SK-N-SH (cell line): ENCODE measurements at regions of chr6 and their contacts with region 1.

Region 1: GRCh38 chr6:36094753-36095496 is 35.4 kb upstream of the MAPK13 start:
- DNase-seq: peak; percentile 66
- H3K4me3 ChIP-seq: peak overlapping the region in 1 of 2 experiments; percentile 39; a peak in 1 of 4 replicates
- H3K27ac ChIP-seq: no peak overlapping the region; a peak in 2 of 4 replicates
- H3K4me1 ChIP-seq: peaks cover 0 to 20% of the 10 kb centered on the region in 2 experiments; a peak in 2 of 4 replicates
- H3K27me3 ChIP-seq: no peaks in the 10 kb centered on the region
- CTCF ChIP-seq: peak; percentile 97
- EP300 ChIP-seq: no peak
- RAD21 ChIP-seq: peak; percentile 95

Region 2: GRCh38 chr6:36027501-36028087 is 67.3 kb before region 1 on chr6 and contains the start of gene MAPK14:
- CTCF ChIA-PET with region 1: interaction called, 224 read pairs
- POLR2A ChIA-PET with region 1: interaction called, 14 read pairs
- DNase-seq: peak; percentile 97
- H3K4me3 ChIP-seq: peak within 1 kb of the TSS; percentile 96 to 97
- H3K27ac ChIP-seq: peak within 1 kb of the TSS; percentile 72 to 88
- H3K4me1 ChIP-seq: no peaks in the 10 kb centered on the region; a peak in 2 of 4 replicates
- H3K27me3 ChIP-seq: no peaks in the 10 kb centered on the region
- CTCF ChIP-seq: peak; percentile 85
- EP300 ChIP-seq: no peak
- RAD21 ChIP-seq: peak; percentile 98
- polyA plus RNA-seq, gene MAPK14: 19.8 and 27.4 TPM in 2 replicates

Region 3: GRCh38 chr6:36052097-36052496 is 42.8 kb before region 1 on chr6:
- CTCF ChIA-PET with region 1: interaction called, 29 read pairs
- POLR2A ChIA-PET with region 1: no interaction called
- DNase-seq: no peak
- H3K4me3 ChIP-seq: no peak overlapping the region
- H3K27ac ChIP-seq: no peak overlapping the region
- H3K4me1 ChIP-seq: peaks cover 16 to 34% of the 10 kb centered on the region in 2 experiments; a peak in 3 of 4 replicates
- H3K27me3 ChIP-seq: no peaks in the 10 kb centered on the region
- CTCF ChIP-seq: no peak
- EP300 ChIP-seq: no peak
- RAD21 ChIP-seq: no peak

Region 4: GRCh38 chr6:36075656-36076055 is 19.3 kb before region 1 on chr6:
- CTCF ChIA-PET with region 1: interaction called, 45 read pairs
- POLR2A ChIA-PET with region 1: no interaction called
- DNase-seq: peak; percentile 8
- H3K4me3 ChIP-seq: no peak overlapping the region
- H3K27ac ChIP-seq: no peak overlapping the region
- H3K4me1 ChIP-seq: no peaks in the 10 kb centered on the region
- H3K27me3 ChIP-seq: no peaks in the 10 kb centered on the region
- CTCF ChIP-seq: peak; percentile 20; the same call in 1 of the 2 replicates
- EP300 ChIP-seq: no peak
- RAD21 ChIP-seq: peak; percentile 32

Region 5: DNA sequence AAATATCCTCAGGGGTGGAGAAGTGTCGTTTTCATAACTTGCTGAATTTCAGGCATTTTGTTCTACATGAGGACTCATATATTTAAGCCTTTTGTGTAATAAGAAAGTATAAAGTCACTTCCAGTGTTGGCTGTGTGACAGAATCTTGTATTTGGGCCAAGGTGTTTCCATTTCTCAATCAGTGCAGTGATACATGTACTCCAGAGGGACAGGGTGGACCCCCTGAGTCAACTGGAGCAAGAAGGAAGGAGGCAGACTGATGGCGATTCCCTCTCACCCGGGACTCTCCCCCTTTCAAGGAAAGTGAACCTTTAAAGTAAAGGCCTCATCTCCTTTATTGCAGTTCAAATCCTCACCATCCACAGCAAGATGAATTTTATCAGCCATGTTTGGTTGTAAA is 15.1 kb after region 1 on chr6:
- CTCF ChIA-PET with region 1: interaction called, 32 read pairs
- POLR2A ChIA-PET with region 1: no interaction called
- DNase-seq: no peak
- H3K4me3 ChIP-seq: no peak overlapping the region
- H3K27ac ChIP-seq: peak overlapping the region in 1 of 2 experiments; percentile 86; a peak in 2 of 4 replicates
- H3K4me1 ChIP-seq: peaks cover 0 to 26% of the 10 kb centered on the region in 2 experiments; a peak in 2 of 4 replicates
- H3K27me3 ChIP-seq: no peaks in the 10 kb centered on the region
- CTCF ChIP-seq: no peak
- EP300 ChIP-seq: no peak
- RAD21 ChIP-seq: no peak

Region 6: GRCh38 chr6:36196880-36197548 is 102.1 kb after region 1 on chr6:
- CTCF ChIA-PET with region 1: interaction called, 12 read pairs
- POLR2A ChIA-PET with region 1: no interaction called
- DNase-seq: peak; percentile 99
- H3K4me3 ChIP-seq: peak overlapping the region; percentile 62 to 63
- H3K27ac ChIP-seq: peak overlapping the region; percentile 49 to 91; a peak in 3 of 4 replicates
- H3K4me1 ChIP-seq: peaks cover 6 to 16% of the 10 kb centered on the region in 2 experiments; a peak in 2 of 4 replicates
- H3K27me3 ChIP-seq: no peaks in the 10 kb centered on the region
- CTCF ChIP-seq: no peak
- EP300 ChIP-seq: no peak
- RAD21 ChIP-seq: no peak